PC-9 (cell line): ENCODE measurements at regions of chrX and their contacts with region 1.

Region 1: DNA sequence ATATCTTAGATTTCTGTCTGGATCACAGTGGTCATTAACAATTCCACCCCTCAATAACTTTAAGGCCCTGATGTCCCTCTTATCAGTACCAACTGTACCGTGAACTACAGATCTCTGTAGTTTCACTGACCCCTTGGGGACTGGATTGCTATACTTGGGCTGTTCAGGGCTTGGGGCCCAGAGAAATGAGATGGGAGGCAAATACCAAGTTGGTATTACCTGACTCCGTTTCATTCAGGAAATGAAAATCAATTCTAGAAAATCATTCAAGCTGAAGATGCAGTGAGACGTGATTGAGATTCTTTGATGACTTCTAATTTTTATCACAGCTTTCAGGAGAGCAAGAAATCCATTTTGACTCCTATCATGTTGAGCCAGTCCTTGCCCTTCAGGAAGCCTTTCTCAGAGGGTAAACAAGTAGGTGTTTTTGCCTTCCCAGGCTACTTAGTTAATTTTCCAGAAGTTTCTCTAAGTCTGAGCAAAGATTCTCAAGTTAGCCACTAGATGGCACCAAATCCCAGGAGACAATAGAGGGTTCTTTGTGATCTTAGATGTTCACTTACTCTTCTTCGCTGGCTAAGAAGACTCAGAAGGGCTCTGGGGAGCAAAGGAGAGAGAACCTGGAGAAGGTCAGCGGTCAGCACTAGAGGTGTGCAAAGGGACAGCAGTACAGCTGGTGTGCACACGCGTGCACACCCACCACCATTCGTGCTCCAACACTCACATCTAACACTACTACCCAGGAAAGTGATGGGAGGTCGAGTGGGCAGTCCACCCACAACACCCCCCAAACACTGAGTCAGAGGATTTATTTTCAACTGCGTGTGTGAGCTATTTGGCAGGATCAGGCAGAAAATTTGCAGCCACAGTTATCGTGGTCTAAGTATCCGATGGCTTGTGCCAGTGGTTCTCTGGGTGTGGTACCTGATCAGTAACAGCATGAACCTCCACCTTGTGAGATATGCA is 7.4 kb downstream of the HNRNPH2 start:
- DNase-seq: peak in 1 of 2 experiments; percentile 16
- H3K4me3 ChIP-seq: no peak overlapping the region
- H3K27ac ChIP-seq: no peak overlapping the region
- H3K4me1 ChIP-seq: peaks cover 5% of the 10 kb centered on the region; the same call in 1 of the 2 replicates
- H3K27me3 ChIP-seq: no peaks in the 10 kb centered on the region
- CTCF ChIP-seq: peak; percentile 79

Region 2: GRCh38 chrX:101595739-101596419 is 180.4 kb after region 1 on chrX:
- CTCF ChIA-PET with region 1: no interaction called
- POLR2A ChIA-PET with region 1: no interaction called
- intact Hi-C with region 1: loop called (anchors 5 kb)
- DNase-seq: peak; percentile 18 to 52
- H3K4me3 ChIP-seq: no peak overlapping the region
- H3K27ac ChIP-seq: no peak overlapping the region
- H3K4me1 ChIP-seq: no peaks in the 10 kb centered on the region
- H3K27me3 ChIP-seq: peaks cover 23% of the 10 kb centered on the region
- CTCF ChIP-seq: peak; percentile 81

Region 3: DNA sequence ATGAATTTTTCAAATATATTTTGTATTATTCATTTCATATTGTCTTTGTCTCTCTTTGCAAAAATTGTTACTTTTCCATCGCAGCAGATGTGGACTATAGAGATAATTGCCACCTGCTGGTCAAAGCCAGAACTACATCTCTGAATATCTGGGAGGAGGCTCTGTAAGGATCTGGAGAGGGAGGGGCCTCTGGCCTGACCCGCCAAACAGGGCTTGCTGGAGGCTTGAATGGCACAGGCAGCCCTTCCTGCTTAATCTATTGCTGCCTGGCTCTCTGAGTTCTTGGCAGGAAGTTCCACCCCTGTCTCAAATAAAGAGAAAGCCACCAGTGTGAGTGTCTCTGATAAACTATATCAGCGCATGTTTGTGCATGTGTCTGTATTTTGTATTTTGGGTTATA is 383.9 kb after region 1 on chrX:
- CTCF ChIA-PET with region 1: no interaction called
- POLR2A ChIA-PET with region 1: no interaction called
- intact Hi-C with region 1: loop called (anchors 2 kb)
- DNase-seq: peak; percentile 64 to 74
- H3K4me3 ChIP-seq: no peak overlapping the region
- H3K27ac ChIP-seq: no peak overlapping the region
- H3K4me1 ChIP-seq: no peaks in the 10 kb centered on the region
- H3K27me3 ChIP-seq: no peaks in the 10 kb centered on the region
- CTCF ChIP-seq: peak; percentile 79

Region 4: DNA sequence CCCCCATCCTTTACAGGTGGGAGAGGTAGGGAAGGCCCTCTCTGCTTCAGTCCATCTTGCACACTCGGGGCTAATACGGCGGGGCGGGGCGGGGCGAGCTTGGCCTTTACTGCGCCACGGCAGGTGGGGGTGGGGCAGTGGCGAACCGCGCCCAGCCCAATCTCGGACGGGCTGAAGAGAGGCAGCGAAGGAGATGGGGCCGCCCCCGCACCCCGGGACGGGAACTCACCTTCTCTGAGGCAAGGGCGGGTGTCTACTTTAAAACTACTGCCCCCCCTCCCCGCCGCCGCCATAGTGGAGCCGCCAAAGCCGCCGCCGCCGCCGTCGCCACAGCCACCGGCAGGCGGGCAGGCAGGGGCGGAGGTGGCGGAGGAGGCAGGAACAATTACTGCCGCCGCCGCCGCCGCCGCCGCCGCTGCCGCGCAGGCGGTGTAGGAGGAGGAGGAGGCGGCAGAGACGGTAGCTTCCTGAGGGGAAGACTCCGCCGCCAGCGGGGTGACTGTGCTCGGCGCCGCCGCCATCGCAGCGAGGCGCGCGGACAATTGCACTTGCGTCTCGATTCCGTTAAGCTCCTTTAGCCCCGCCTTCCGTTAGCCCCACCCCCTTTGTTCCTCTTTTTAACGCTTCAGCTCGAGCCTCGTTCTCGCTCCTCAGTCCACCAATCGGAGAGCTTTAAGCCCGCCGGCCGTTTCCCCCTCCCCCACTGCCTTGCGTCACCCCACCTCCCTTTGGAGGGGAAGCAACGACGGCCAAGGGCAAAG is 516.2 kb after region 1 on chrX and contains the start of gene ZMAT1:
- CTCF ChIA-PET with region 1: no interaction called
- POLR2A ChIA-PET with region 1: no interaction called
- intact Hi-C with region 1: no loop called
- DNase-seq: peak in 1 of 2 experiments; percentile 7
- H3K4me3 ChIP-seq: peak within 1 kb of the TSS; percentile 58; the same call in 1 of the 2 replicates
- H3K27ac ChIP-seq: no peak within 1 kb of the TSS
- H3K4me1 ChIP-seq: no peaks in the 10 kb centered on the region
- H3K27me3 ChIP-seq: no peaks in the 10 kb centered on the region
- CTCF ChIP-seq: no peak
- total RNA-seq, gene ZMAT1: not detected in 2 replicates

Region 5: DNA sequence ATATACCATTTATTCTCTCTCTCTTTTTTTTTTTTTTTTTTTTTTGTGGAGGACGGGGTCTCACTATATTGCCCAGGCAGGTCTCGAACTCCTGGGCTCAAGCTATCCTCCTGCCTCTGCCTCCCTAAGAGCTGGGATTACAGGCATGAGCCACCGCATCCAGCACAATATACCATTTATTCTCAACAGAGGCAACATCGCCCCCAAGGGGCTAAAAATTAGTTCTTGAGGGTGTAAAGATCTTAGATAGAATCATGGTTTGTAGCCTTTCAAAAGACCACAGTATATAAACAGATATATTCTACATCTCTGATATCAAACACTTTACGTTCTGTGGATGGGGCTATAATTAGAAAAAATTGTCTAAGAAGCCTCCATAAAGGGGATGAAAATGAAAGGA is 670.2 kb after region 1 on chrX:
- CTCF ChIA-PET with region 1: no interaction called
- POLR2A ChIA-PET with region 1: no interaction called
- intact Hi-C with region 1: loop called (anchors 10 kb)
- DNase-seq: no peak
- H3K4me3 ChIP-seq: no peak overlapping the region
- H3K27ac ChIP-seq: no peak overlapping the region
- H3K4me1 ChIP-seq: no peaks in the 10 kb centered on the region
- H3K27me3 ChIP-seq: no peaks in the 10 kb centered on the region
- CTCF ChIP-seq: peak; percentile 32; the same call in 1 of the 2 replicates

Region 6: GRCh38 chrX:102899940-102900916 is 1484.8 kb after region 1 on chrX:
- CTCF ChIA-PET with region 1: interaction called, 19 read pairs
- POLR2A ChIA-PET with region 1: no interaction called
- intact Hi-C with region 1: no loop called
- DNase-seq: peak; percentile 45 to 55
- H3K4me3 ChIP-seq: no peak overlapping the region
- H3K27ac ChIP-seq: no peak overlapping the region
- H3K4me1 ChIP-seq: no peaks in the 10 kb centered on the region
- H3K27me3 ChIP-seq: no peaks in the 10 kb centered on the region
- CTCF ChIP-seq: peak; percentile 61